ENCODE measurements at regions of chr4 and their contacts with region 1.

Region 1: DNA sequence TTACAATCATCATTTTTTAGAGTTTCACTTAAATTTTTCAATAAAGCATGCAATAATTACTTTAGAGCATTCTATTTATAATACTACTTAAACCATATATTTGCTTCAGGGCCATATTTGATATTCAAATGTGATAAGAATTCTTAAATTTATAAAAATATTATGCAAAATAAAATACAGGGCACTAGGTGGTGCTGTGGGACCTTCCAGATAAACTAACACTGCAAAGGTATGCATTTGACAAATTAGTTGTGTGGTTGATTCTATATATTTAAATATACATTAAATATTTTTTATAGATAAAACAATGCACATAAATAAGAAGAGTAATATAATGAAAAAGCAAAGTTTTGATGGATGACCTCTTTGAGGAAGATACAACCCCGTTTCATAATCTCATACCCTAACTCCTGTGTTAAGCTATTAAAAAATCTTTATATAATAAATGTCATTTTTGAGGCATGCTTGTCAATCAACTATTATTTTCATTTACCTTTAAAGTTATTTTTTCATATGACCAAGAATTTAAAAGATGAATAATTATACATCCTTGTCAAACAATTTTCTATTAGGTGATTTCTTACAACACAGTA is 128.4 kb downstream of the REELD1 start:
- DNase-seq: no peak
- ATAC-seq: no peak
- H3K4me3 ChIP-seq: no peak overlapping the region
- H3K27ac ChIP-seq: no peak overlapping the region
- H3K4me1 ChIP-seq: no peaks in the 10 kb centered on the region
- H3K27me3 ChIP-seq: no peaks in the 10 kb centered on the region
- CTCF ChIP-seq: peak; percentile 37
- EP300 ChIP-seq: no peak
- POLR2A ChIP-seq: no peak
- RAD21 ChIP-seq: no peak

Region 2: DNA sequence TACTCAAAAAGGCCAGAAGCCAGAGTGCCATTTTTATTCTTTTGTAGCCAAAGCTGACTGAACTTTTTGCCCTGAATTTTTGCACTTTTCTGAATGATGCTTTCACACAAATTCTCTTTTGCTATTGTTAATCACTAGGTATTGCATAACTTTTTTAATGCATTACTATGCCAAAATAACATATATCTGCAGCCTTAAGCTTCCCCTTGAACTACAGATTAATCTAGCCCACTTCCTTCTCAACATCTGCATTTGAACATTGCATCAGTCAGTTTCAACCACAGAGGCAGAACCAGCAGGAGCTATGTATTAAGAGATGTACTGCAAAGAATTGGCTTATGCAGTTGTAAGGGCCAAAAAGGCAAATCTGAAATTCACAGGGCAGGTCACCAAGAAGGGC is 2004.5 kb before region 1 on chr4:
- CTCF ChIA-PET with region 1: no interaction called
- POLR2A ChIA-PET with region 1: no interaction called
- in situ Hi-C with region 1: no loop called
- intact Hi-C with region 1: no loop called
- DNase-seq: no peak
- ATAC-seq: no peak
- H3K4me3 ChIP-seq: no peak overlapping the region
- H3K27ac ChIP-seq: no peak overlapping the region
- H3K4me1 ChIP-seq: no peaks in the 10 kb centered on the region
- H3K27me3 ChIP-seq: no peaks in the 10 kb centered on the region; a peak in 1 of 5 replicates
- CTCF ChIP-seq: no peak
- EP300 ChIP-seq: no peak
- POLR2A ChIP-seq: no peak
- RAD21 ChIP-seq: no peak

Region 3: GRCh38 chr4:146310319-146311021 is 32.2 kb before region 1 on chr4:
- CTCF ChIA-PET with region 1: no interaction called
- POLR2A ChIA-PET with region 1: no interaction called
- in situ Hi-C with region 1: no loop called
- intact Hi-C with region 1: no loop called
- DNase-seq: no peak
- ATAC-seq: no peak
- H3K4me3 ChIP-seq: no peak overlapping the region
- H3K27ac ChIP-seq: no peak overlapping the region
- H3K4me1 ChIP-seq: no peaks in the 10 kb centered on the region
- H3K27me3 ChIP-seq: no peaks in the 10 kb centered on the region
- CTCF ChIP-seq: no peak
- EP300 ChIP-seq: no peak
- POLR2A ChIP-seq: no peak
- RAD21 ChIP-seq: no peak

Region 4: DNA sequence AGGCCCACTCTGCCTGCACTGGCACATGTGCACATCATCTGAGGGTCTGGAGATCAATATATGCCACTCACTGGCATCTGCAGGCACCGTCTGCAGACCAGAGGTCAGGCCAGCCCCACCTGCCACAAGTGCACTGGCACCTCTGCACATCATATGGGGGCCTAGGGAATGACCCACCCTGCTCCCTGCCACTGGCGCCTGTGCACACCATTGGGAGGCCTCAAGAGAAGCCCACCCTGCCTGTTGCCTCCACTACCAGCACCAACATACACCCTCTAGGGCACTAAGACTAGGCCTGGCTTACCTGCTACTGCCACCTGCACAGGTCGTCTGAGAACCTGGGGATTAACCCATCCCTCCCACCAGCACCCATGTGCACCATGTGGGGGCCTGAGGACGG is 14.8 kb before region 1 on chr4:
- CTCF ChIA-PET with region 1: no interaction called
- POLR2A ChIA-PET with region 1: no interaction called
- in situ Hi-C with region 1: no loop called
- intact Hi-C with region 1: no loop called
- DNase-seq: no peak
- ATAC-seq: no peak
- H3K4me3 ChIP-seq: no peak overlapping the region
- H3K27ac ChIP-seq: no peak overlapping the region
- H3K4me1 ChIP-seq: no peaks in the 10 kb centered on the region
- H3K27me3 ChIP-seq: no peaks in the 10 kb centered on the region
- CTCF ChIP-seq: no peak
- EP300 ChIP-seq: no peak
- POLR2A ChIP-seq: no peak
- RAD21 ChIP-seq: no peak

Region 5: DNA sequence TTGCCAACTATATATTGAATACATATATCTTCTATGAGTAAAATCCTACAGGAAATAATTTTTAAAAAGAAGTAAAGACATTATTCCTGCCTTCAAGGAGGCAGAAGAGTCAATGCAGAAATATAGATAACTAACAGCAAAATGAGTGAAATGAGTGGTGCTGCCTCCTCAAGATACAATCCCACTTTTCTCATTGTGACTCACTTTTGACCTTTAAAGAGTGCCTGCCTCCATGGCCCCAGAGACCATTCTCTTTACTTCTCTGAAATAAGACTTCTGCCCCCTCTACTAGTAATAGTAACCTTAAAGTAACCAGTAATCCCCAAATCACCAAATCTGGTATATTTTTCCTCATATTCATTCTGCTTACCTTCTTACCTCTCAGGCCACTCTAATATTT is 163.6 kb after region 1 on chr4:
- CTCF ChIA-PET with region 1: no interaction called
- POLR2A ChIA-PET with region 1: no interaction called
- in situ Hi-C with region 1: no loop called
- intact Hi-C with region 1: loop called (anchors 5 kb)
- DNase-seq: no peak
- ATAC-seq: no peak
- H3K4me3 ChIP-seq: no peak overlapping the region
- H3K27ac ChIP-seq: no peak overlapping the region
- H3K4me1 ChIP-seq: no peaks in the 10 kb centered on the region
- H3K27me3 ChIP-seq: no peaks in the 10 kb centered on the region
- CTCF ChIP-seq: no peak
- EP300 ChIP-seq: no peak
- POLR2A ChIP-seq: no peak
- RAD21 ChIP-seq: no peak

Region 6: DNA sequence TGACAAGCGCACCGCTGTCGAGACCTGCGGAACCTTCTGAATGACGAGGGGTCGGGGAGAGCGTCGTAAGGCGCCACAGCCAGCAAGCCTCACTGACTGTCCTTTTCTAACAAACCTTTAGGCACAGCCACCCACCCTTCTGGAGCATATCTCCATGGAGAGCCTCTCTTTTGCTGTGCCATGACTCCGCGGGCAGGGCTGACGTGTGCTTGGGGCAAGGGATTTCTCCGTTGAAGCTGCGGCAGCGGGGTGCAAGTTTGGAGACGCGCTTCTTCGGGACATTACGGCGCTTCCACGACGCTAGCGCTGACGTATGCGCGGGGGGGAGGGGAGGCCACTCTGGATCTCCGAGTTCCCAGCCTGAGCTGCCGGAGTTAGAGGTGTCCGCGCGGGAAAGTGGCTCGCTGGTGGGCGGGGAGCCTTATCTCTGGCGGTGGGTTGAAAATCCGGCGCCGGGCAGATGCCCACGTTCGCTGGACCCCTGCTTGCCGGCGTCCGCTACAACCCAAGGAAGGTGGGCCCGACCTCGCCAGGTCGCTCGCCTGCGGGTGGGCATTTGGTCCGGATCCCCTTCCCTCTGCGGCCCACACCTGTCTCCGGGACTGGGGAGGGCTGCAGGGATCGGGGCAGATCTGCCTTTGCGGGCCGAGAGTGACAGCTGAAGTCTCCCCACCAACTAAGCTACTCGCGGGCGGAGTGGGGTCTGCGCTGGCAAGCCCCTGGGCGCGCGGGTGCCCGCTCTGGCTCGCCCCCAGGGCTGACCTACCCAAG is 179.6 kb after region 1 on chr4:
- CTCF ChIA-PET with region 1: no interaction called
- POLR2A ChIA-PET with region 1: no interaction called
- in situ Hi-C with region 1: no loop called
- intact Hi-C with region 1: loop called (anchors 5 kb)
- DNase-seq: peak; percentile 63
- ATAC-seq: peak; percentile 88
- H3K4me3 ChIP-seq: peak overlapping the region; percentile 89 to 98 (median 94)
- H3K27ac ChIP-seq: peak overlapping the region; percentile 92
- H3K4me1 ChIP-seq: peaks cover 20% of the 10 kb centered on the region
- H3K27me3 ChIP-seq: no peaks in the 10 kb centered on the region; a peak in 2 of 5 replicates
- CTCF ChIP-seq: 0 out of 2 replicates have a peak, but pooled peaks have one; percentile 7
- EP300 ChIP-seq: no peak
- POLR2A ChIP-seq: peak; percentile 61 to 71
- RAD21 ChIP-seq: no peak; the same call in 1 of the 2 replicates

Region 7: GRCh38 chr4:146638801-146639605 is 296.3 kb after region 1 on chr4 and contains the start of gene POU4F2:
- CTCF ChIA-PET with region 1: no interaction called
- POLR2A ChIA-PET with region 1: no interaction called
- in situ Hi-C with region 1: no loop called
- intact Hi-C with region 1: loop called (anchors 5 kb)
- DNase-seq: no peak
- ATAC-seq: no peak
- H3K4me3 ChIP-seq: no peak within 1 kb of the TSS
- H3K27ac ChIP-seq: no peak within 1 kb of the TSS
- H3K4me1 ChIP-seq: no peaks in the 10 kb centered on the region
- H3K27me3 ChIP-seq: peaks cover 0 to 5% of the 10 kb centered on the region in 2 experiments; a peak in 1 of 5 replicates
- CTCF ChIP-seq: no peak
- EP300 ChIP-seq: no peak
- POLR2A ChIP-seq: no peak
- RAD21 ChIP-seq: no peak
- total RNA-seq, gene POU4F2: not detected in 2 replicates

Region 8: GRCh38 chr4:147096667-147097604 is 754.2 kb after region 1 on chr4:
- CTCF ChIA-PET with region 1: interaction called, 3 read pairs
- POLR2A ChIA-PET with region 1: no interaction called
- in situ Hi-C with region 1: loop called (anchors 25 kb)
- intact Hi-C with region 1: loop called (anchors 5 kb)
- DNase-seq: peak; percentile 34
- ATAC-seq: peak; percentile 41; the same call in 1 of the 3 replicates
- H3K4me3 ChIP-seq: no peak overlapping the region
- H3K27ac ChIP-seq: no peak overlapping the region
- H3K4me1 ChIP-seq: no peaks in the 10 kb centered on the region
- H3K27me3 ChIP-seq: no peaks in the 10 kb centered on the region
- CTCF ChIP-seq: peak; percentile 66
- EP300 ChIP-seq: no peak
- POLR2A ChIP-seq: no peak
- RAD21 ChIP-seq: no peak